ENCODE measurements at regions of chr12 and their contacts with region 1.

Region 1: DNA sequence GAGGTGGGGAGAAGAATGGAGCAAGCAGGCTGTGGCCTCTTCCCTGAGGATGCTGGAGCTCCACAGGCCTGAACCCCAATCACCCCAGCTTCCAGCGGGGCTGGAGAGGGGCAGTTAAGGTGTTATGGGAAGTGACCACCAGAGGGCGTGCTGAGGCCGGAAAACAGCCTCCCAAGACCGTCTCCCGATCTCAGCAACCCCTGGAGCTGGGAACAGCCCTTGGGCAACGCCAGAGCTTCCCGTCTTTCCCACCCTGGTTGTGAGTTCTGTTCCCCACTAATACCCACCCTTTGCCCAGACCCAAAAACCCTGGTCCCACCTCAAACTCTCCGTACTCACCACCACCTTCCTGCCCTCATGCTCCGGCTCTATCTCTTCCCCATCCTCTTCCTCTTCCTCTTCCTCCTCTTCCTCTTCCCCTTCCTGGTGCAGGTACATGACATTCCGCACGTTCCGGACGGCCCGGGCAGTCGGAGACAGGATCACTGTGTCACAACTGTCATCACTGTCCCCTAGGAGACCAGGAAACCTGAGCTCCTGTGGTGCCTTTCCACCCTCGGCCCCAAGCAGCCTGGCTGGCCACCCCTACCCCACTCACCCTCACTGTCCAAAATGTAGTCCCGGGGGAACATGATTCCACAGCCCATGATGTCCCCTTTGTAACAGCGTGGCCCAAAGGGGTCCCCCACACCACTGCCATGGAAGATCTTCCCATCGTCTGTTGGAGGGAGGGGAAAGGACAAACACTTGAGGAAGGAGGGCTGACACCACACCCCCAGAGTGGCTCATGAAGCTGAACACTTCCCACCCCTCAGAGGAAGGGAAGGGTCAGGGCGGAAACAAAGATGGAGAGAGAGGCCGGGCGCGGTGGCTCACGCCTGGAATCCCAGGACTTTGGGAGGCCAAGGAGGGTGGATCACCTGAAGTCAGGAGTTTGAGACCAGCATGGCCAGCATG is 12.9 kb downstream of the SPRYD3 start:
- DNase-seq: peak in 1 of 2 experiments; percentile 93
- H3K4me3 ChIP-seq: no peak overlapping the region
- H3K27ac ChIP-seq: no peak overlapping the region
- H3K4me1 ChIP-seq: peaks cover 4 to 23% (median 6%) of the 10 kb centered on the region in 4 experiments
- H3K27me3 ChIP-seq: peaks cover 0 to 2% (median 0%) of the 10 kb centered on the region in 4 experiments; a peak in 2 of 7 replicates
- CTCF ChIP-seq: peak in 2 of 3 experiments; percentile 94 to 97; a peak in 3 of 4 replicates
- EP300 ChIP-seq: no peak
- POLR2A ChIP-seq: no peak
- RAD21 ChIP-seq: peak; percentile 96 to 97

Region 2: DNA sequence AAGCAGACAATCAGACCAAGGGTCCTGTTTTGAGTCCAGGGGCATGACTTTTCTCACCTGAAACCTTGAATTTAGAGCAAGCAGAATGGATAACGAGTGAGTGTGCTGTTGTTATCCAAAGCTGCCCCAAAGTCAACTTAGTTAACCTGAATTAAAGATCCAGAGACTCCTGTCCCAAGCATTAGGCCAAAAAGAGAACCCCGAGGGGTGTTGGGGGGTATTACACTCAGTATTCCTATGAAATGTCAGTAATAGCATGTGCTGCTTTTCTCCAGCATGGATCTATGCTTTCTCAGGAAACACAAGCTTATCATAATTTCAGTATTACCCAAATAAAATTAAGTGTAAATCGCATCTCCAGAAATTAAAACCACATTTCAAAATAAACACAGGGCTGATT is 41.0 kb before region 1 on chr12:
- CTCF ChIA-PET with region 1: no interaction called
- POLR2A ChIA-PET with region 1: no interaction called
- DNase-seq: no peak
- H3K4me3 ChIP-seq: no peak overlapping the region
- H3K27ac ChIP-seq: no peak overlapping the region
- H3K4me1 ChIP-seq: no peaks in the 10 kb centered on the region
- H3K27me3 ChIP-seq: no peaks in the 10 kb centered on the region
- CTCF ChIP-seq: no peak
- EP300 ChIP-seq: no peak
- POLR2A ChIP-seq: no peak
- RAD21 ChIP-seq: no peak

Region 3: GRCh38 chr12:53047221-53048042 is 18.8 kb before region 1 on chr12:
- CTCF ChIA-PET with region 1: interaction called, 258 read pairs
- POLR2A ChIA-PET with region 1: interaction called, 26 read pairs
- DNase-seq: peak in 1 of 2 experiments; percentile 83
- H3K4me3 ChIP-seq: peak overlapping the region; percentile 34 to 94 (median 50); a peak in 6 of 8 replicates
- H3K27ac ChIP-seq: no peak overlapping the region
- H3K4me1 ChIP-seq: peaks cover 29 to 75% (median 53%) of the 10 kb centered on the region in 4 experiments
- H3K27me3 ChIP-seq: peaks cover 0 to 20% (median 17%) of the 10 kb centered on the region in 4 experiments; a peak in 6 of 7 replicates
- CTCF ChIP-seq: peak in 2 of 3 experiments; percentile 20 to 48; a peak in 3 of 4 replicates
- EP300 ChIP-seq: no peak
- POLR2A ChIP-seq: no peak
- RAD21 ChIP-seq: 0 out of 4 replicates have a peak, but pooled peaks of 1 of the 2 experiments have one; percentile 6

Region 4: GRCh38 chr12:53054112-53054833 is 12.0 kb before region 1 on chr12:
- CTCF ChIA-PET with region 1: interaction called, 258 read pairs
- POLR2A ChIA-PET with region 1: interaction called, 26 read pairs
- DNase-seq: peak; percentile 87 to 97
- H3K4me3 ChIP-seq: peak overlapping the region; percentile 82 to 86 (median 84)
- H3K27ac ChIP-seq: peak overlapping the region; percentile 75; the same call in 1 of the 2 replicates
- H3K4me1 ChIP-seq: peaks cover 4 to 30% (median 23%) of the 10 kb centered on the region in 4 experiments
- H3K27me3 ChIP-seq: peaks cover 0 to 12% (median 3%) of the 10 kb centered on the region in 4 experiments; a peak in 4 of 7 replicates
- CTCF ChIP-seq: no peak
- EP300 ChIP-seq: no peak
- POLR2A ChIP-seq: peak in 1 of 2 experiments; percentile 86; a peak in 2 of 3 replicates
- RAD21 ChIP-seq: no peak

Region 5: GRCh38 chr12:53079226-53080117 is 13.2 kb after region 1 on chr12 and contains the start of gene SPRYD3:
- CTCF ChIA-PET with region 1: interaction called, 240 read pairs
- POLR2A ChIA-PET with region 1: interaction called, 9 read pairs
- DNase-seq: peak; percentile 94 to 100
- H3K4me3 ChIP-seq: peak within 1 kb of the TSS; percentile 49 to 77 (median 68)
- H3K27ac ChIP-seq: peak within 1 kb of the TSS; percentile 62; the same call in 1 of the 2 replicates
- H3K4me1 ChIP-seq: peaks cover 0 to 3% (median 2%) of the 10 kb centered on the region in 4 experiments; a peak in 3 of 7 replicates
- H3K27me3 ChIP-seq: peaks cover 0 to 6% (median 4%) of the 10 kb centered on the region in 4 experiments; a peak in 4 of 7 replicates
- CTCF ChIP-seq: no peak
- EP300 ChIP-seq: no peak
- POLR2A ChIP-seq: no peak; a peak in 2 of 3 replicates
- RAD21 ChIP-seq: no peak
- total RNA-seq, gene SPRYD3: 6.6 and 6.8 TPM in 2 replicates

Region 6: DNA sequence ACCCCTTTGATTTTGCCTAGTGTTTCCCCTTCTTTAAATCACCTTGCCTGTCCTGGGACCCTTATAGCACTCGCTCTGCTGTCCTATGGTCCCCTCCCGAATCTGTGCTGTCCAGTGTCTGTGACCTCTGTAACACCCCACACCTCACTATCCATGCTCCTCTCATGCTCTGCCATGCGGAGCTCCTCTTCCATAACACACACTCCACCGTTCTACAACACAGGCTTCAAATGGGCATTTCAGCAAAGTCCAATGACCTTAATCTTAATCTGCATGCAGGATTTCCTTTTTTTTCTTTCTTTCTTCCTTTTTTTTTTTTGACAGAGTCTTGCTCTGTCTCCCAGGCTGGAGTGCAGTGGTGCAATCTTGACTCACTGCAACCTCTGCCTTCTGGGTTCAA is 62.9 kb after region 1 on chr12:
- CTCF ChIA-PET with region 1: interaction called, 15 read pairs
- POLR2A ChIA-PET with region 1: interaction called, 3 read pairs
- DNase-seq: no peak
- H3K4me3 ChIP-seq: no peak overlapping the region
- H3K27ac ChIP-seq: no peak overlapping the region
- H3K4me1 ChIP-seq: no peaks in the 10 kb centered on the region
- H3K27me3 ChIP-seq: no peaks in the 10 kb centered on the region
- CTCF ChIP-seq: no peak
- EP300 ChIP-seq: no peak
- POLR2A ChIP-seq: no peak
- RAD21 ChIP-seq: no peak

Region 7: GRCh38 chr12:53180220-53180930 is 114.1 kb after region 1 on chr12 and contains the starts of genes CSAD and ZNF740:
- CTCF ChIA-PET with region 1: interaction called, 26 read pairs
- POLR2A ChIA-PET with region 1: interaction called, 3 read pairs
- DNase-seq: peak; percentile 94
- H3K4me3 ChIP-seq: peak within 1 kb of the TSS; percentile 71 to 89 (median 83)
- H3K27ac ChIP-seq: peak within 1 kb of the TSS; percentile 50; the same call in 1 of the 2 replicates
- H3K4me1 ChIP-seq: peaks cover 2 to 10% (median 4%) of the 10 kb centered on the region in 4 experiments; a peak in 6 of 7 replicates
- H3K27me3 ChIP-seq: peaks cover 7 to 35% (median 21%) of the 10 kb centered on the region in 4 experiments
- CTCF ChIP-seq: no peak
- EP300 ChIP-seq: peak in 1 of 2 experiments; percentile 56; a peak in 1 of 3 replicates
- POLR2A ChIP-seq: peak in 1 of 2 experiments; percentile 52; a peak in 1 of 3 replicates
- RAD21 ChIP-seq: no peak
- total RNA-seq, gene CSAD: 8.8 and 10.0 TPM in 2 replicates
- total RNA-seq, gene ZNF740: 35.6 and 40.0 TPM in 2 replicates

Region 8: GRCh38 chr12:53190108-53190729 is 124.0 kb after region 1 on chr12:
- CTCF ChIA-PET with region 1: interaction called, 91 read pairs
- POLR2A ChIA-PET with region 1: no interaction called
- DNase-seq: peak in 1 of 2 experiments; percentile 81
- H3K4me3 ChIP-seq: no peak overlapping the region
- H3K27ac ChIP-seq: no peak overlapping the region
- H3K4me1 ChIP-seq: peaks cover 0 to 6% (median 3%) of the 10 kb centered on the region in 4 experiments; a peak in 4 of 7 replicates
- H3K27me3 ChIP-seq: peaks cover 0 to 8% (median 3%) of the 10 kb centered on the region in 4 experiments; a peak in 4 of 7 replicates
- CTCF ChIP-seq: peak; percentile 86 to 97 (median 89)
- EP300 ChIP-seq: no peak
- POLR2A ChIP-seq: no peak
- RAD21 ChIP-seq: peak; percentile 63 to 75